Activated naive CD4-positive, alpha-beta T cell treated with anti-CD3 and anti-CD28 coated beads for 36 hours (primary cell): ENCODE measurements at regions of chr21 and their contacts with region 1.

Region 1: GRCh38 chr21:43893536-43894205 is 28.6 kb downstream of the AGPAT3 start:
- DNase-seq: peak; percentile 62
- H3K4me3 Mint-ChIP-seq: peak overlapping the region; percentile 61
- H3K27ac Mint-ChIP-seq: peak overlapping the region; percentile 69
- H3K4me1 Mint-ChIP-seq: peaks cover 40% of the 10 kb centered on the region
- H3K27me3 Mint-ChIP-seq: no peaks in the 10 kb centered on the region

Region 2: GRCh38 chr21:43783101-43783700 is 110.5 kb before region 1 on chr21:
- CTCF ChIA-PET with region 1: no interaction called
- intact Hi-C with region 1: loop called (anchors 5 kb)
- DNase-seq: peak; percentile 31
- H3K4me3 Mint-ChIP-seq: no peak overlapping the region
- H3K27ac Mint-ChIP-seq: peak overlapping the region; percentile 92
- H3K4me1 Mint-ChIP-seq: peaks cover 37% of the 10 kb centered on the region
- H3K27me3 Mint-ChIP-seq: no peaks in the 10 kb centered on the region

Region 3: GRCh38 chr21:43810505-43811261 is 83.0 kb before region 1 on chr21:
- CTCF ChIA-PET with region 1: no interaction called
- intact Hi-C with region 1: loop called (anchors 1 kb)
- DNase-seq: peak; percentile 95
- H3K4me3 Mint-ChIP-seq: no peak overlapping the region
- H3K27ac Mint-ChIP-seq: no peak overlapping the region
- H3K4me1 Mint-ChIP-seq: peaks cover 7% of the 10 kb centered on the region
- H3K27me3 Mint-ChIP-seq: no peaks in the 10 kb centered on the region

Region 4: GRCh38 chr21:43827015-43827611 is 66.6 kb before region 1 on chr21:
- CTCF ChIA-PET with region 1: no interaction called
- intact Hi-C with region 1: no loop called
- DNase-seq: no peak
- H3K4me3 Mint-ChIP-seq: no peak overlapping the region
- H3K27ac Mint-ChIP-seq: no peak overlapping the region
- H3K4me1 Mint-ChIP-seq: no peaks in the 10 kb centered on the region
- H3K27me3 Mint-ChIP-seq: no peaks in the 10 kb centered on the region

Region 5: GRCh38 chr21:43872531-43873197 is 21.0 kb before region 1 on chr21:
- CTCF ChIA-PET with region 1: interaction called, 3 read pairs
- intact Hi-C with region 1: loop called (anchors 2 kb)
- DNase-seq: no peak
- H3K4me3 Mint-ChIP-seq: no peak overlapping the region
- H3K27ac Mint-ChIP-seq: peak overlapping the region; percentile 22
- H3K4me1 Mint-ChIP-seq: peaks cover 68% of the 10 kb centered on the region
- H3K27me3 Mint-ChIP-seq: no peaks in the 10 kb centered on the region

Region 6: DNA sequence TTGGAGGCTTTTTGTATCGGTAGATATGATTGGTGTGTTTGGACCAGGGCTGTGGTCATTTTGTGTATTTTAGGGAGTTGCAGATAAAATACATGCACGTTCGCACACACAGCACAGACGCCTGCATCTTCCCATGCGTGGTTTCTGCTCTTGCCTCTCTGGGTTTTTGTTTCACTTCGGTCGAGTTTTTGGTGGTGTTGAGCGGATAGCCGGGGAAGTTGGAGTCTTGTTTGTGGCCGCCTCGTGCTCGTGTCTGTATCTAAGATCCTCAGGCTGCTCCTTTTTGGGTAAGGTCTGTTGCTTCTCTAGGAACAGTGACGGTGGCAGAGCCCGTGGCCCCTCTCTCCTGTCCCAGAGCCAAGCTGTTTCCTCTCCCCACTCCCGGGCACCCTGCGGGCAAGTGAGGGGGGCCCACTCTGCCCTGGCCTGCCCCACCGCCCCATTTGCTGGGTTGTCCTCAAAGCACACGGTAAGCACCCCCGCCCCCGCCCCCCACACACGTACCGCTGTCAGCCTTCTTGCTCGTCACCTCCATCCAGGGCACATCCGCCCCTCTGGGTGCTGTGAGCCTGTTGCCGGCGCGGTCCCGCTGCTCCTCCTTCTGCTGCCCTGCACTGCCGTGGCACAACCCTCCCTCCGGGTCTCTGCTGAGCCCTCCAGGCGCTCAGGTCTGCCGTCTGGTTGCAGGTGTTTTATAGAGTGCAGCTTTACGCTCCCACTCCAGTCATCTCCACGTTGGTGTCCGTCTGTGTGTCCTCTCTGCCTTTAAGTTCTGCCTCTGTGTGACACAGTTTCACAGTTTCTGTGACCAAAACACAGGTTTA is 23.2 kb after region 1 on chr21:
- CTCF ChIA-PET with region 1: interaction called, 9 read pairs
- intact Hi-C with region 1: loop called (anchors 2 kb)
- DNase-seq: peak; percentile 77
- H3K4me3 Mint-ChIP-seq: peak overlapping the region; percentile 74
- H3K27ac Mint-ChIP-seq: peak overlapping the region; percentile 35
- H3K4me1 Mint-ChIP-seq: peaks cover 54% of the 10 kb centered on the region
- H3K27me3 Mint-ChIP-seq: no peaks in the 10 kb centered on the region

Region 7: DNA sequence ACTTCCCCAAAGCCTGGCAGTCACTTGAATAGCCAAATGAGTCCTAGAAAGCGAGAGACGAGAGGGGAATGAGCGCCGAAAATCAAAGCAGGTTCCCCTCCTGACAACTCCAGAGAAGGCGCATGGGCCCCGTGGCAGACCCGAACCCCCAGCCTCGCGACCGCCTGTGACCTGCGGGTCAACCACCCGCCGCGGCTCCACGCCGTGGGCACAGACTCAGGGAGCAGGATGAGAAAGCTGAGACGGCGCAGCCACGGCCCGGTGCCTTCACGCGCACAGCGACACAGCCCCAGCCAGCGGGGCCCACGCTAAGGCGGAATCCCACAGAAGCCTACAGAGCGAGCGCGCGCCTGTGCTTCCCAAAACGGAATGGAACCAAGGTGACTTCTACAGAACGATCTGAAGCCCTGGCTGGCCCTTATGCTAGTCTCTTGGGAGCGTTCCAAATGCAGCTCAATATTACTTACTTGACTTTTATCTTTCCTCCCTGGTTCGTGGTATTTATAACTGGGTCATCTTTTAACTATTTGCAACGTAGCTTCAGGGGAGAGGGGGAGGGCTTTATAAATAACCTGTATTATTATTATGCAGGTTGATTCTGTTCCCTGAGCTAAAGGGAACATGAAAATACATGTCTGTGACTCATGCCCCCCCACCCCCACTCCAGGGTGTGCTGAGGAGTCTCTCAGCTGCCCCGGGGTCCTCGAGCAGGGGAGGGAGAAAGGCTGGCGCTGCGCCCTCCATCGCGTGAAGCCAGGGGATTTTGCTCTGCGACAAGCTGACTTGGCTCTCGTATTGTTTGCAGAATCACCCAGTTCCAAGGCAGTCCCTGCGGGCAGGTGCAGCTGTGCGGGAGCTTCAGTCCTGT is 816.0 kb after region 1 on chr21:
- CTCF ChIA-PET with region 1: no interaction called
- intact Hi-C with region 1: no loop called
- DNase-seq: peak; percentile 17
- H3K4me3 Mint-ChIP-seq: no peak overlapping the region
- H3K27ac Mint-ChIP-seq: no peak overlapping the region
- H3K4me1 Mint-ChIP-seq: peaks cover 37% of the 10 kb centered on the region
- H3K27me3 Mint-ChIP-seq: peaks cover 84% of the 10 kb centered on the region